ENCODE measurements at regions of chr6 and their contacts with region 1.

Region 1: DNA sequence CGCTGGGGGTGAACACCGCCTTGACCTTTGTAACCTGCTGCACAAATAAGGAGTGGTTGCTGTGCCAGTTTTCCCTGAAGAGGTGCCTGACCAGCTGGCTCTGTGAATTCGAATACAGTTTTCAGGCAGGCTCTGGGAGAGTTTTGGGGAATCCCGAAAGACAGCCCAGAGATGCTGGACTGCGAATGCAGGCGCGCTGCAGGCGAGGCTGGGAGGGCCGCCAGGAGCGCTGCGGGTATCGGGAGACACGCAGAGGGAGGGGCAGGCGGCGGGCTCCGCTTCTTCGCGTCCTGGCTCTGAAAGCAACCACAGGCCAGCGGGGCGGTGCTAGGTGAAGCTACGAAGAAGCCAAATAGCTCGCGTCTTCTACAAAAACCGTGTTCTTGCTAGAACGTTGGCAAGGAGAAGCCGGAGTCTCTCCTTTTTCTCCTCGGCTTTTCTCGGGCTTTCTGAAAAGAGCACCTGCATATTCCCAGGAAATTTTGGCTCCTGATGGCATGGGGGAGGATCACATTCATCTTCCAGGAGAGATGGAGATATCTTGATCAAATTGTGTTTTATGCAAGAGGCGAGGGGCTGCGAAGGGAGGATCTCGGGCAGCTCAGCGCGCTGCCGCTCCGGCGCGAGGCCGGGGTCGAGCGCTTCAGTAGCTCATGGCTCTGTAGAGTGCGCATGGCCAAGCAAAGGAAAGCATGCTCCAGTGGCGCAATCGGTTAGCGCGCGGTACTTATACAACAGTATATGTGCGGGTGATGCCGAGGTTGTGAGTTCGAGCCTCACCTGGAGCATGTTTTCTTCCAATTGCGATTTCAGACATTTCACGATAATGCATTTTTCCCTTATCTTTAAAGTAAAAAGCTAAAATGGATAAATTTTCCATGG is 158.1 kb upstream of the ZNF184 start:
- DNase-seq: peak; percentile 80 to 82
- H3K4me3 ChIP-seq: peak overlapping the region; percentile 51
- H3K4me3 Mint-ChIP-seq: peak overlapping the region; percentile 90
- H3K27ac Mint-ChIP-seq: peak overlapping the region; percentile 88
- H3K4me1 ChIP-seq: peaks cover 3% of the 10 kb centered on the region; the same call in 1 of the 2 replicates
- H3K4me1 Mint-ChIP-seq: no peaks in the 10 kb centered on the region
- H3K27me3 ChIP-seq: no peaks in the 10 kb centered on the region
- H3K27me3 Mint-ChIP-seq: no peaks in the 10 kb centered on the region
- CTCF ChIP-seq: peak; percentile 24 to 48

Region 2: GRCh38 chr6:27479319-27480182 is 151.4 kb before region 1 on chr6:
- CTCF ChIA-PET with region 1: no interaction called
- POLR2A ChIA-PET with region 1: no interaction called
- intact Hi-C with region 1: no loop called
- DNase-seq: peak; percentile 62 to 87
- H3K4me3 ChIP-seq: peak overlapping the region; percentile 52
- H3K4me3 Mint-ChIP-seq: no peak overlapping the region
- H3K27ac Mint-ChIP-seq: no peak overlapping the region
- H3K4me1 ChIP-seq: no peaks in the 10 kb centered on the region
- H3K4me1 Mint-ChIP-seq: no peaks in the 10 kb centered on the region
- H3K27me3 ChIP-seq: no peaks in the 10 kb centered on the region
- H3K27me3 Mint-ChIP-seq: no peaks in the 10 kb centered on the region
- CTCF ChIP-seq: no peak

Region 3: GRCh38 chr6:27672113-27672799 is 41.3 kb after region 1 on chr6:
- CTCF ChIA-PET with region 1: no interaction called
- POLR2A ChIA-PET with region 1: no interaction called
- intact Hi-C with region 1: loop called (anchors 5 kb)
- DNase-seq: peak; percentile 79 to 87
- H3K4me3 ChIP-seq: peak overlapping the region; percentile 18
- H3K4me3 Mint-ChIP-seq: peak overlapping the region; percentile 75
- H3K27ac Mint-ChIP-seq: peak overlapping the region; percentile 46
- H3K4me1 ChIP-seq: peaks cover 4% of the 10 kb centered on the region; the same call in 1 of the 2 replicates
- H3K4me1 Mint-ChIP-seq: peaks cover 30% of the 10 kb centered on the region
- H3K27me3 ChIP-seq: no peaks in the 10 kb centered on the region
- H3K27me3 Mint-ChIP-seq: no peaks in the 10 kb centered on the region
- CTCF ChIP-seq: no peak

Region 4: GRCh38 chr6:28090917-28091586 is 460.1 kb after region 1 on chr6:
- CTCF ChIA-PET with region 1: no interaction called
- POLR2A ChIA-PET with region 1: no interaction called
- intact Hi-C with region 1: no loop called
- DNase-seq: no peak
- H3K4me3 ChIP-seq: no peak overlapping the region
- H3K4me3 Mint-ChIP-seq: no peak overlapping the region
- H3K27ac Mint-ChIP-seq: no peak overlapping the region
- H3K4me1 ChIP-seq: no peaks in the 10 kb centered on the region
- H3K4me1 Mint-ChIP-seq: no peaks in the 10 kb centered on the region
- H3K27me3 ChIP-seq: no peaks in the 10 kb centered on the region
- H3K27me3 Mint-ChIP-seq: no peaks in the 10 kb centered on the region
- CTCF ChIP-seq: no peak